ENCODE measurements at regions of chr16 and their contacts with region 1.

Region 1: GRCh38 chr16:49407873-49408550 is 34.4 kb downstream of the C16orf78 start:
- DNase-seq: peak; percentile 87
- ATAC-seq: peak; percentile 98
- H3K4me3 Mint-ChIP-seq: no peak overlapping the region
- H3K27ac Mint-ChIP-seq: no peak overlapping the region
- H3K4me1 Mint-ChIP-seq: peaks cover 4% of the 10 kb centered on the region
- H3K27me3 Mint-ChIP-seq: peaks cover 6% of the 10 kb centered on the region

Region 2: GRCh38 chr16:49491771-49492761 is 84.1 kb after region 1 on chr16:
- CTCF ChIA-PET with region 1: interaction called, 3 read pairs
- POLR2A ChIA-PET with region 1: no interaction called
- intact Hi-C with region 1: loop called in 1 of 2 experiments (anchors 1 kb)
- DNase-seq: peak; percentile 69
- ATAC-seq: peak; percentile 64
- H3K4me3 Mint-ChIP-seq: no peak overlapping the region
- H3K27ac Mint-ChIP-seq: no peak overlapping the region
- H3K4me1 Mint-ChIP-seq: no peaks in the 10 kb centered on the region
- H3K27me3 Mint-ChIP-seq: peaks cover 2% of the 10 kb centered on the region

Region 3: DNA sequence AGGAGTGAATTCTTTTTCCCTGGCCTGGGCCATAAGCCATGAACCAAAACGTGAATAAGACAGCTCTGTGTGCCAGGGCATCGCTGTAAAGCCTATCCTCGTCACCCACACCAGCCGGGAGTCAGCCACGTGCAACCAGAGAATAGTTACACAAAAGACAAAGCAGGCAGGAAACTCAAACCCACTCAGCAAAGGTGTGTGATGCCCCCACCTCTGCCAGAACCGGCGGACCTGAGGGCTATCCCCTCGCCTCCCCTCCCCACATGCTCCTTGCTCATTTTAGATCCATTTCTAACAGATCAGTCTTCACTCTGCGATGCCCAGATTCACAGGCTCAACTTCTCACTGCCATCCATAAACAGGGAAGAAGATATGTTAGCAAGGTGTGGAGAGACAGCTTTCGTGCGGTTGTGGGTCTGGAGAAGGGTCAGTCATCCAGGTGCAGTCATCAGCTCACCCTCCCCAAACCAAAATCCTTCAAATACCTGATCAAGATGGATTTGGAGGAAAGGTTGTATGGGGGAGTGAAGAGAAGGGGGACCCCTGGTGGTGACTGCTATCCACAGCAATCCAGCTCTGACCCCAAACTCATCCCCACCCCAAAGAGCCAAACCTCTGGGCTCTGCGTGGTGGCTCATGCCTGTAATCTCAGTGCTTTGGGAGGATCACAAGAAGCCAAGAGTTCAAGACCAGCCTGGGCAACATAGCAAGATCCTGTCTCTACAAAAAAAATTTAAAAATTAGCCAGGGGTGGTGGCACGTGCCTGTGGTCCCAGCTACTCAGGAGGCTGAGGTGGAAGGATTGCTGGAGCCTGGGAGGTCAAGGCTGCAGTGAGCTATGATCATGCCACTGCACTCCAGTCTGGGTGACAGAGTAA is 184.8 kb after region 1 on chr16:
- CTCF ChIA-PET with region 1: interaction called, 28 read pairs
- POLR2A ChIA-PET with region 1: no interaction called
- intact Hi-C with region 1: loop called (anchors 1 kb)
- DNase-seq: peak; percentile 65
- ATAC-seq: peak; percentile 74
- H3K4me3 Mint-ChIP-seq: no peak overlapping the region
- H3K27ac Mint-ChIP-seq: no peak overlapping the region
- H3K4me1 Mint-ChIP-seq: peaks cover 11% of the 10 kb centered on the region
- H3K27me3 Mint-ChIP-seq: peaks cover 3% of the 10 kb centered on the region

Region 4: DNA sequence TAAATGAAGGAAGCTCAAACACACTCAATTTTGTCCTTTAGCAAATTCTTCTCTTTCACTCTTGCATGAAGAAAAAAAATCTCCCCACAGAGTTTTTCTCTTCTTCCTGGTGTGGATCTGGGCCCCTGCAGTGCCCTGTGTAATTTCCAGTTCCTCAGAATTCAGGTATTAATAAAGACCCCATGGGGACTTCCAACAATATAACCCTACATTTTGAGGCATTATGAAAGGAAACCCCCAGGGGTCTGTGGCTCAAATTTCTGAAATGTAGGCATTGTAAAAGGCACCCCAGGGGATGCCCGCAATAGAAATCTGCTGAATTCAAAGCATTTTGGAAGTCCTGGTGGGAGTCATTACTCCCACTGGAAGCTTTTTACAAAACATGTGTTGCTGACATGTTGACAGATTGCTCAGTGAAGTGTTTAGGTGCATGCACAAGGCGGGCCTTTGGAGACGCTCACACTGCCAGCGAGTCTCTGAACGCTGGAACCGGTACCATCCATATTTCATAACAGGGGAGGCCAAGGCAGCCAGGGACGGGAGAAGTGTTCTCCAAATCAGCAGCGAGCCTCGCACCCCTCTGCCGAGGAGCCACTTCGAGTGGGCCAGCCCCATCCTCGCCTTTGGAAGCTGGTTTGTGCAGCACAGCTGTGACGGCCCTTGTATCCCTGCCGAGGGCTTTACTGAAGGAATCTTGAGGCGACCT is 293.9 kb after region 1 on chr16:
- CTCF ChIA-PET with region 1: no interaction called
- POLR2A ChIA-PET with region 1: no interaction called
- intact Hi-C with region 1: loop called in 1 of 2 experiments (anchors 10 kb)
- DNase-seq: no peak
- ATAC-seq: no peak
- H3K4me3 Mint-ChIP-seq: no peak overlapping the region
- H3K27ac Mint-ChIP-seq: no peak overlapping the region
- H3K4me1 Mint-ChIP-seq: no peaks in the 10 kb centered on the region
- H3K27me3 Mint-ChIP-seq: peaks cover 10% of the 10 kb centered on the region

Region 5: GRCh38 chr16:49876716-49877129 is 468.7 kb after region 1 on chr16:
- CTCF ChIA-PET with region 1: no interaction called
- POLR2A ChIA-PET with region 1: no interaction called
- intact Hi-C with region 1: loop called in 1 of 2 experiments (anchors 2 kb)
- DNase-seq: peak; percentile 74
- ATAC-seq: peak; percentile 81
- H3K4me3 Mint-ChIP-seq: no peak overlapping the region
- H3K27ac Mint-ChIP-seq: no peak overlapping the region
- H3K4me1 Mint-ChIP-seq: no peaks in the 10 kb centered on the region
- H3K27me3 Mint-ChIP-seq: peaks cover 29% of the 10 kb centered on the region

Region 6: GRCh38 chr16:49921791-49922456 is 513.9 kb after region 1 on chr16:
- CTCF ChIA-PET with region 1: interaction called, 7 read pairs
- POLR2A ChIA-PET with region 1: no interaction called
- intact Hi-C with region 1: loop called (anchors 1 to 10 kb)
- DNase-seq: peak; percentile 72
- ATAC-seq: peak; percentile 74
- H3K4me3 Mint-ChIP-seq: no peak overlapping the region
- H3K27ac Mint-ChIP-seq: no peak overlapping the region
- H3K4me1 Mint-ChIP-seq: no peaks in the 10 kb centered on the region
- H3K27me3 Mint-ChIP-seq: peaks cover 3% of the 10 kb centered on the region

Measured in activated CD4-positive, alpha-beta T cell treated with anti-CD3 and anti-CD28 coated beads for 36 hours (primary cell).